ENCODE measurements at regions of chr14 and their contacts with region 1.

Region 1: DNA sequence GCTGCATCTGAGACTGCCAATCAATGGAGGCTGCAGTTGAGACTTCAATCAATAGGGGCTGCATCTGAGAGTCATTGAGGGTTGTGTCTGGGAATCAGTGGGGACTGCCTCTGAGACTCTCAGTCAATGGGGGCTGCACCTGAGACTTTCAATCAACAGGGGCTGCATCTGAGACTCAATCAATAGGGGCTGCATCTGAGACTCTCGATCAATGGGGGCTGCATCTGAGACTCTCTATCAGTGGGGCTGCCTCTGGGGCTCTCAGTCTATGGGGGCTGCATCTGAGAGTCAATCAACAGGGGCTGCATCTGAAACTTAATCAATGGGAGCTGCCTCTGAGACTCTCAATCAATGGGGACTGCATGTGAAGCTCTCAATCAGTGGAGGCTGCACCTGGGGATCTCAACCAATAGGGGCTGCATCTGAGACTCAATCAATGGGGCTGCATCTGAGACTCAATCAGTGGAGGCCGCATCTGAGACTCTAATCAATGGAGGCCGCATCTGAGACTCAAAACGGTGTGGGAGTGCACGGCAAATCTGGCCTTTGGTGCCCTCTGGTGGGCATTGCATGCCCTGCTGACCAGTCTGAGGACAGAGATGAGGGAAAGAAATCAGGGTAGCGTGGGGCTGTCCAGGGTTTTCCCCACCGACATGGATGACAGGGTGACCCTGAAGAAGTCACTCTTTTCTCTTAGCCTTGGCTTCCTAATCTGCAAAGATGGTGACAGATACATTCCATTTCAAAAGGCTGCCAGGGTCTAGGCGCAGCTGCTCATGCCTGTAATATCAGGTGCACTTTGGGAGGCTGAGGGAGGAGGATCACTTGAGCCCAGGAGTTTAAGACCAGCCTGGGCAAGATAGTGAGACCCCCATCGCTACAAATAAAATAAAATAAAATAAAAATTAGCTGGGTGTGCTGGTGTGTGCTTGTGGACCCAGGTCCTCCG is 41.3 kb upstream of the EIF5 start:
- DNase-seq: peak; percentile 89
- ATAC-seq: peak; percentile 97
- H3K4me3 Mint-ChIP-seq: no peak overlapping the region
- H3K27ac Mint-ChIP-seq: no peak overlapping the region
- H3K4me1 Mint-ChIP-seq: no peaks in the 10 kb centered on the region
- H3K27me3 Mint-ChIP-seq: peaks cover 9% of the 10 kb centered on the region

Region 2: DNA sequence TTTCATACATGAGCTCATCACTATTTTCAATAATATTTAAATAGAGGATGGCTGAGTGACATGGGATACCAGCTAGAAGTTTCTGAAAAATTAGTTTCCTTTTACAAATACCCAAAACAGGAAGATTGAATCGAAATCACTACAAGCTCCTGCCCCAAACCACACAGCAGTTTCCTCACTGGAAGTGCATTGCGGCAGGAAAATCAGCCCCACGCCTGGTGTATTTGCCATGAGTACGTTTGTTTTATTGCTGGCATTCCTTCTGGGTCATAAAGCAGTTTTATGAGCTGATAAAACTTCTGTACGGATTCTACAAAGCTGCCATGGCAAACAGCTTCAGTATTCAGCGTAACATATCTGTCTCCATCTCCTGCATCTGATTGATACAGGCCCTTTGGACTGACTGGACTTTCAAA is 259.0 kb before region 1 on chr14:
- CTCF ChIA-PET with region 1: no interaction called
- POLR2A ChIA-PET with region 1: no interaction called
- intact Hi-C with region 1: no loop called
- DNase-seq: no peak
- ATAC-seq: no peak
- H3K4me3 Mint-ChIP-seq: no peak overlapping the region
- H3K27ac Mint-ChIP-seq: no peak overlapping the region
- H3K4me1 Mint-ChIP-seq: no peaks in the 10 kb centered on the region
- H3K27me3 Mint-ChIP-seq: no peaks in the 10 kb centered on the region

Region 3: GRCh38 chr14:103185051-103185992 is 107.4 kb before region 1 on chr14:
- CTCF ChIA-PET with region 1: no interaction called
- POLR2A ChIA-PET with region 1: no interaction called
- intact Hi-C with region 1: loop called (anchors 2 to 10 kb)
- DNase-seq: no peak
- ATAC-seq: no peak
- H3K4me3 Mint-ChIP-seq: no peak overlapping the region
- H3K27ac Mint-ChIP-seq: no peak overlapping the region
- H3K4me1 Mint-ChIP-seq: peaks cover 3% of the 10 kb centered on the region
- H3K27me3 Mint-ChIP-seq: peaks cover 40% of the 10 kb centered on the region

Region 4: GRCh38 chr14:103232298-103232808 is 60.3 kb before region 1 on chr14:
- CTCF ChIA-PET with region 1: no interaction called
- POLR2A ChIA-PET with region 1: no interaction called
- intact Hi-C with region 1: no loop called
- DNase-seq: no peak
- ATAC-seq: no peak
- H3K4me3 Mint-ChIP-seq: no peak overlapping the region
- H3K27ac Mint-ChIP-seq: no peak overlapping the region
- H3K4me1 Mint-ChIP-seq: no peaks in the 10 kb centered on the region
- H3K27me3 Mint-ChIP-seq: peaks cover 13% of the 10 kb centered on the region

Region 5: DNA sequence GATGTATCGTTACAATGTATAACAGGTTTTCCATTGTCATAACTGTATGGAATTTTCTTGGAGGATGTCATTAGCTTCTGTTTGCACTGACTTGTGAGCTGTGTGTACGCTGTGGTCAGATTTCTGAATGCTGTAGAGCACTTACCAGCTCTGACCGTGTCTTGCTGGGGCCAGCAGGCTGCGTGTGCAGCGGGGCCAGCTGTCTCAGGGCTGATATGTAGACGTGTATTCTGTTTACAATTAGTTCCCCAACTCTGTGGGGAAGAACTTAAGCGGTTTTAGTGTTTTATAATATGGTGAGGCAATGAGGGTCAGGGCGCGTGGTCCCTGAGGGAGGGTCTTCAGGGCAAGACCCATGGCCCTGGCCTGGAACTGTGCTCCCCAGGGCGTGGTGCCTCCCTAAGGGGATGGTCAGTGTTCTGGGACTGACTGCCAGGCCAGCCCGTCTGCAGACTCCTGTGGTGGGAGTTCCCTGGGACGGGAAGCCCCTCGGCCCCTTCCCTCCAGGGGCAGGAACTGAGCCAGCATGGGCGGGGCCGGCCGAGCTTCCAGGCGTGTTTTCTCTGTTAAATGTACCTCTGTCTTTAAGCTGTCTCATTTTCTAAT is 403.9 kb after region 1 on chr14:
- CTCF ChIA-PET with region 1: no interaction called
- POLR2A ChIA-PET with region 1: no interaction called
- intact Hi-C with region 1: no loop called
- DNase-seq: no peak
- ATAC-seq: no peak
- H3K4me3 Mint-ChIP-seq: no peak overlapping the region
- H3K27ac Mint-ChIP-seq: no peak overlapping the region
- H3K4me1 Mint-ChIP-seq: no peaks in the 10 kb centered on the region
- H3K27me3 Mint-ChIP-seq: no peaks in the 10 kb centered on the region

Region 6: DNA sequence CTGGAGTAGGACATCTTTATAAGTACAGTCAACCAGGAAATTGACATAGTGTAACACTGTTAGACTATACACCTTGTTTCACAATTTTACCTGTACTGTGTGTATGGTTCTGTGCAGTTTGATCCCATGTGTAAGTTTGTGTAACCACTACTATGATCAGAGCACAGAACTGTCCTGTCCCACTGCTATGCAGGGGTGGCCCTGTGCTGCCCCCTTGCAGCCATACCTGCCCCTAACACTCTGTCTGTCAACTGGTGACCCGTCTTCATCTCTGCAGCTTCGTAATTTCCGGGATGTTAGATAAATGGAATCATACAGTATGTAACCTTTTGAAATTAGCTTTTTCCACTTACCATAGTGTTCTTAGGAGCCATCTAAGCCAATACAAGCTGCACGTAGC is 708.3 kb after region 1 on chr14:
- CTCF ChIA-PET with region 1: no interaction called
- POLR2A ChIA-PET with region 1: no interaction called
- intact Hi-C with region 1: no loop called
- DNase-seq: peak; percentile 41
- ATAC-seq: peak; percentile 65
- H3K4me3 Mint-ChIP-seq: no peak overlapping the region
- H3K27ac Mint-ChIP-seq: no peak overlapping the region
- H3K4me1 Mint-ChIP-seq: no peaks in the 10 kb centered on the region
- H3K27me3 Mint-ChIP-seq: peaks cover 4% of the 10 kb centered on the region